K562 (cell line): ENCODE measurements at regions of chr11 and their contacts with region 1.

Region 1: DNA sequence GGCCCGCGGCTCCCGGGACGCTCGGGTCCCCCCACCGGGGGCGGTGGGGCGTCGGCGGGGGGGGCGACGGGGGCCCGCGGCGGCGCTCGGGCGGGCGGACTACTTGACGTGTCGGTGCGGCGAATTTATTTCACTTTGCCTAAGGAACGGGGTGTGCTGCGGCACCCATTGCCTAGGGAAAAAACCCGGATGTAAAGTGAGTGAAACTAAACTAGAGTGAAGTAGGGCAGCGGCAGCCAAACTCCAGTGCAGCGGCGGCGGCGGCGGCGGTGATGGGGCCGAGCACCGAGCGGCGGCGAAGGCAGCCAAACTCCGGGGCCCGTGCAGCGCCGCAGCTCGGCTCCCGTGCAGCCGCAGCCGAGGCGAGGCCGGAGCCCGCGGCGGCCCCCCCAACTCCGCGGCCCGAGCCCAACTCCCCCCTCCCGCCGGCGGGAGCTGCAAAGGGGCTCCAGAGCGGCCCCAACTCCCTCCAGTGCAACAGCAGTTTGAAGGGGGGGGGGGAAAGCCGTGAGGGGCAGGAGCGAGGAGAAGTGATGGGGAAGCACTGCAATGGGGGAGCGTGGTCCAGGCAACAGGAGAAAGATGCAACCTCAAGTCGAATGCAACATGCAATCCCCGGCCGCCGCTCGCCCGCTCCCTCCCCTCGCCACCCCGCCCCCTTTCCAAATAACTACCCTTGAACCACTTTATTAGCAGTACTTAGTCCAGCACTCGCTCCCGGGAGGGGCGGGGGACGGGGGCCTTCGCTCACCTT is 647 bp upstream of the PHF21A start:
- DNase-seq: peak; percentile 60 to 85 (median 62)
- ATAC-seq: peak; percentile 4
- H3K4me3 ChIP-seq: peak overlapping the region; percentile 79
- H3K27ac ChIP-seq: peak overlapping the region; percentile 70; the same call in 2 of the 3 replicates
- H3K4me1 ChIP-seq: peaks cover 10 to 15% of the 10 kb centered on the region in 2 experiments; a peak in 4 of 5 replicates
- H3K27me3 ChIP-seq: no peaks in the 10 kb centered on the region
- CTCF ChIP-seq: no peak
- EP300 ChIP-seq: no peak
- POLR2A ChIP-seq: no peak
- RAD21 ChIP-seq: no peak

Region 2: GRCh38 chr11:46075168-46075567 is 46.7 kb before region 1 on chr11:
- CTCF ChIA-PET with region 1: no interaction called
- POLR2A ChIA-PET with region 1: no interaction called
- in situ Hi-C with region 1: no loop called
- intact Hi-C with region 1: loop called (anchors 5 kb)
- DNase-seq: peak; percentile 39 to 89 (median 64)
- ATAC-seq: peak; percentile 83
- H3K4me3 ChIP-seq: no peak overlapping the region
- H3K27ac ChIP-seq: peak overlapping the region; percentile 69; the same call in 2 of the 3 replicates
- H3K4me1 ChIP-seq: peaks cover 6 to 15% of the 10 kb centered on the region in 2 experiments; a peak in 4 of 5 replicates
- H3K27me3 ChIP-seq: no peaks in the 10 kb centered on the region
- CTCF ChIP-seq: no peak
- EP300 ChIP-seq: peak; percentile 84
- POLR2A ChIP-seq: no peak
- RAD21 ChIP-seq: no peak

Region 3: DNA sequence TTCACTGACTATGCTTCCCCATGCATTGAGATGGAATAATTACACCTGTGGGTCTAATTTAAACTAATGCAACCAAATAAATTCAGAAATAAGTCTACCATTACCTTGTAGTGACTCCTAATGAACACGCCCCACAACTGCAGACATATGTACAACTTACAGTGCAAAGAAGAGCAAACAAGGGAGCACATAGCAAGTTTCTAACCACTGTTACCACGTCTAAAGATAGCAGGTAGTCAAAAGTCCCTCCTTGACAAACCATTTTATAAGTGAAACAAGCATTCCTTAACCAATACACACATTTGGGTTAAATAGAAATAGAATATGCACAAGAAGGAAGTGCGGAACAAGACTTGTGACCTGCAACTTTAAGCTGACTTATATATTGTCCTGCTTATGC is 21.2 kb before region 1 on chr11:
- CTCF ChIA-PET with region 1: no interaction called
- POLR2A ChIA-PET with region 1: interaction called, 13 read pairs
- in situ Hi-C with region 1: no loop called
- intact Hi-C with region 1: no loop called
- DNase-seq: no peak
- ATAC-seq: peak; percentile 11; the same call in 2 of the 3 replicates
- H3K4me3 ChIP-seq: no peak overlapping the region
- H3K27ac ChIP-seq: no peak overlapping the region
- H3K4me1 ChIP-seq: peaks cover 9 to 37% of the 10 kb centered on the region in 2 experiments; a peak in 4 of 5 replicates
- H3K27me3 ChIP-seq: no peaks in the 10 kb centered on the region
- CTCF ChIP-seq: no peak
- EP300 ChIP-seq: no peak
- POLR2A ChIP-seq: no peak
- RAD21 ChIP-seq: no peak

Region 4: GRCh38 chr11:46183819-46184218 is 61.9 kb after region 1 on chr11:
- CTCF ChIA-PET with region 1: no interaction called
- POLR2A ChIA-PET with region 1: no interaction called
- in situ Hi-C with region 1: no loop called
- intact Hi-C with region 1: no loop called
- DNase-seq: no peak
- ATAC-seq: no peak
- H3K4me3 ChIP-seq: no peak overlapping the region
- H3K27ac ChIP-seq: no peak overlapping the region
- H3K4me1 ChIP-seq: no peaks in the 10 kb centered on the region
- H3K27me3 ChIP-seq: peaks cover 0 to 9% of the 10 kb centered on the region in 2 experiments; a peak in 2 of 5 replicates
- CTCF ChIP-seq: no peak
- EP300 ChIP-seq: no peak
- POLR2A ChIP-seq: no peak
- RAD21 ChIP-seq: no peak

Region 5: GRCh38 chr11:46295312-46296058 is 173.6 kb after region 1 on chr11:
- CTCF ChIA-PET with region 1: no interaction called
- POLR2A ChIA-PET with region 1: interaction called, 3 read pairs
- in situ Hi-C with region 1: no loop called
- intact Hi-C with region 1: loop called (anchors 5 kb)
- DNase-seq: peak; percentile 91 to 96 (median 96)
- ATAC-seq: peak; percentile 91
- H3K4me3 ChIP-seq: peak overlapping the region; percentile 48
- H3K27ac ChIP-seq: peak overlapping the region; percentile 85
- H3K4me1 ChIP-seq: peaks cover 34 to 55% of the 10 kb centered on the region in 2 experiments
- H3K27me3 ChIP-seq: no peaks in the 10 kb centered on the region
- CTCF ChIP-seq: no peak
- EP300 ChIP-seq: no peak
- POLR2A ChIP-seq: peak; percentile 78
- RAD21 ChIP-seq: no peak; a peak in 1 of 4 replicates